Spleen (tissue), 13 donors: ENCODE measurements at regions of chr6 and their contacts with region 1.

Region 1: DNA sequence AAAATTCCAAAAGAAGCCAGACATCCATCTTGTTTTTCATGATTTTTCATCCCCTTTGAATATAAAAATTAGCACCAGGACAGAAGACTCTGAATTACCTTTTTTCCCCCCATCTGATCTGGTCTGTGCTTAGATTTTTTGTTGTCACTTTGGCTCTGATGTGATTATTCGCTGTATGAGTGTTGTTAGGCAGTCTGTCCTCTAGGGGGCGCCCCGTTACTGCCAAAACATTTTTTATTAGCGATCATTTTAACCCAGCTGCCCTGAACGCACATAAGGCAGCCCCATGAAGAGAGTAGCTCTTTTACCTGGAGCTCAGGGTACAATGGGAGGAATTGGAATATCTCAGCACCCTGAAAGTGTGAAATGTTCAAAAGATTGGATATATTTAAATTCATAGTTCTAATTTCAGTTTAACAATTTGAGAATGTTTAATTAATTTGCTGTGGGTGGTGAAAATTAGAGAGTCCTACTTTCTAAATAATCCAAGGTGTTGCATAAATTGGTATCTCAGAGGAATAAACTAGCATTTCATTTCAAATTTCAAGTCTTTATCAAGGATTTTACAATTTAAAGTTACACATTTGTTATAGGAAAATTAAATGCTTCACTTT is 60.8 kb downstream of the PRPH2 start:
- DNase-seq: peak; percentile 92
- H3K4me3 ChIP-seq: no peak overlapping the region
- H3K27ac ChIP-seq: no peak overlapping the region
- H3K4me1 ChIP-seq: peaks cover 0 to 7% (median 2%) of the 10 kb centered on the region in 6 donors
- H3K27me3 ChIP-seq: no peaks in the 10 kb centered on the region
- CTCF ChIP-seq: peak; percentile 59 to 91 (median 89)
- POLR2A ChIP-seq: no peak

Region 2: DNA sequence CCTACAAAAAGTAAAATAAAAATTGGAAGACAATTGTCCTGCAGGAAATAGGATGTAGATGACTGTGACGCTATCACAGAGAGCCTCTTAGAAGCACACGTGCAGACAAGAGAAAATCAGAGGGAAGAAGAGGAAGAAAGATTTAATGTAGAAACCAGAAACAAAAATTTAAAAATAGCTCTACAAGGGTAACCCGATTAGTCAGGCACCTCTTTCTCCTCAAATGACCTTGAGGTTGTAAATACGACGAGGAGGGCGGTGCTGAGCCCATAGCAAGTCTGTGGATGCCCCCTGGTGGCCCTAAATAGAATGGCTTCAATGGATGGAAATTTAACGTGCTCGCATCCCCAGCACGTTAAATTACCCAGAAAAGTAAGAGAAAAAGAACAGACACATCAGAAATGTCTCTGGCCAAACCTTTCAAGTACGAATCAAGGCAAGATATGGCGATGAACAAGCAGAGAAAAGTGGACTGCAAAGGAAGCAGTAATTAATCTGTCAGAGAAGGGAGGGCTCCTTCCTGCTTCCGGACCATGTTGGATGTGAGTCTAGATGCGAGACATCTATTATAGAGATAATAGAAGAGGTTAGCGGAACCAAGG is 64.9 kb after region 1 on chr6:
- intact Hi-C with region 1: loop called (anchors 5 kb)
- DNase-seq: peak; percentile 87
- H3K4me3 ChIP-seq: peak overlapping the region; percentile 2 to 71 (median 48)
- H3K27ac ChIP-seq: peak overlapping the region; percentile 77 to 88 (median 83)
- H3K4me1 ChIP-seq: peaks cover 0 to 20% (median 15%) of the 10 kb centered on the region in 6 donors
- H3K27me3 ChIP-seq: no peaks in the 10 kb centered on the region
- CTCF ChIP-seq: peak; percentile 81 to 98 (median 92)
- POLR2A ChIP-seq: no peak

Region 3: GRCh38 chr6:42879372-42880239 is 218.0 kb after region 1 on chr6 and contains the start of gene RPL7L1:
- intact Hi-C with region 1: loop called (anchors 5 kb)
- DNase-seq: peak; percentile 96
- H3K4me3 ChIP-seq: peak within 1 kb of the TSS; percentile 50 to 76 (median 65)
- H3K27ac ChIP-seq: peak within 1 kb of the TSS; percentile 90 to 97 (median 95)
- H3K4me1 ChIP-seq: peaks cover 20 to 63% (median 43%) of the 10 kb centered on the region in 6 donors
- H3K27me3 ChIP-seq: no peaks in the 10 kb centered on the region
- CTCF ChIP-seq: peak in 10 of 11 experiments; percentile 12 to 52 (median 32)
- POLR2A ChIP-seq: peak in 1 of 3 donors; percentile 69
- total RNA-seq, gene RPL7L1: 63.4 to 92.4 (median 73.0) TPM

Region 4: DNA sequence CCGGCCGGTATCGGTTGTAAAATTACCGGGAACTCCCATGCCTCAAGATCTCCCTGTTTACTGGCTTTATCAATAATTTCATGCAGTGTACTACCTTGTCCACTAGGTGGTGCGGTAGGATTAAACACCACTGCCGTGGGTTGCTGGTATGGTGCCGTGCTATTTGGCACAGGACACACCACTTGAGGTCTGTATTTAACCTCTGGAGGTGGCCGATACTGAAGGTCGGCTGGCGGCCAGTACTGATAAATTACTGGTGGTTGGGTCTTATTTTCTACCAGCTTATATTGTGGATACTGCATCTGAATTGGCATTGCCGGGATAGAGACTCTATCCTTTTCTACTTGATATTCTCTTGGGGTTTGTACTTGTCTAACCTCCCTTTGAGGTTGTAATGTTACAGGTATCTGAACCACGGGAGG is 239.9 kb after region 1 on chr6:
- intact Hi-C with region 1: loop called (anchors 5 kb)
- DNase-seq: peak; percentile 87
- H3K4me3 ChIP-seq: no peak overlapping the region
- H3K27ac ChIP-seq: peak overlapping the region in 1 of 8 donors; percentile 5
- H3K4me1 ChIP-seq: peaks cover 5 to 42% (median 23%) of the 10 kb centered on the region in 6 donors
- H3K27me3 ChIP-seq: no peaks in the 10 kb centered on the region
- CTCF ChIP-seq: peak; percentile 70 to 93 (median 89)
- POLR2A ChIP-seq: no peak